Heart left ventricle (tissue), 16 donors: ENCODE measurements at regions of chr2 and their contacts with region 1.

Region 1: DNA sequence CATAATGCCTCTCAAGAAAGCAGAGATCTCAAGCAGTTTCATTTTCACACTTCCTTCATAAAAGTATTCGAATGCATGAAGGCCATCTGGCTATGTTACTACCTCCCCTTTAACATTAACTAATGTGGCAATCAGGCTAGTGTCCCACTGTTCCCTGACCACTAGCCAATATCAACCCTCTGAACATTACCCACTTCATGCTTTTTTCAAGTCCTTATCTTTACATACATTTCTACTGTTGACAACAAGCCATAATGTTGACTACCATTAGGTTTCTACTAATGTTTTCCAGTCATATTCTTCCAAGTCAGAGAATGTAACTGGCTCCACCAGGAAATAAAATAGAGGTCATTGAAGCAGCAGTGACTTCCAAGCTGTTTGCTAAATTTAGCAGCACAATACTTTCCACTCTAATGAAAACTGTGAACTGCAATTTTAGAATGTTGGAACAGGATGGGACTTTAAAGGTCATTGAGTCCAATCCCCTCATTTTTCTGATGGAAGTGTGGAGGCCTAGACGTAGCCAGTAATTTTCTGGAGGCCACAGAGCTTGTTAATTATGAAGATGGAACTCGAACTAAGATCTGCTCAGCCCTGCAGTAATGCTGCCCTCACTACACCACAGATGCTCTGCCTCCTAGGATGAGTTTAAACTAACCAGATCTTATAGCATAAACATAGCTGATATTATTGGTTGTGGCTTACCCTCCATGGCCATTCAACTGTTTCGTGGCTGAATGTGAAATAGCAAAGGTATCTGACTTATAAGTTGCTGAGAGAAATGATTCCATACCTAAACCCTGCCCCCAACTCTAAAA is 630 bp upstream of the PPP1R1C start:
- DNase-seq: no peak
- ATAC-seq: peak; percentile 62 to 74 (median 72)
- H3K4me3 ChIP-seq: peak overlapping the region in 9 of 12 donors; percentile 17 to 54 (median 46)
- H3K27ac ChIP-seq: peak overlapping the region; percentile 7 to 86 (median 77)
- H3K4me1 ChIP-seq: peaks cover 0 to 29% (median 13%) of the 10 kb centered on the region in 12 donors
- H3K27me3 ChIP-seq: no peaks in the 10 kb centered on the region
- CTCF ChIP-seq: no peak
- POLR2A ChIP-seq: no peak

Region 2: GRCh38 chr2:181607629-181608590 is 377.1 kb before region 1 on chr2:
- intact Hi-C with region 1: no loop called
- DNase-seq: no peak
- ATAC-seq: no peak
- H3K4me3 ChIP-seq: no peak overlapping the region
- H3K27ac ChIP-seq: no peak overlapping the region
- H3K4me1 ChIP-seq: peaks cover 0 to 5% (median 0%) of the 10 kb centered on the region in 12 donors
- H3K27me3 ChIP-seq: peaks cover 0 to 4% (median 0%) of the 10 kb centered on the region in 9 donors
- CTCF ChIP-seq: no peak
- POLR2A ChIP-seq: no peak

Region 3: GRCh38 chr2:182049372-182050148 is 64.5 kb after region 1 on chr2:
- intact Hi-C with region 1: loop called in 2 of 10 experiments (anchors 5 kb)
- DNase-seq: no peak
- ATAC-seq: peak in 3 of 4 donors; percentile 61 to 64 (median 63)
- H3K4me3 ChIP-seq: no peak overlapping the region
- H3K27ac ChIP-seq: peak overlapping the region in 7 of 12 donors; percentile 12 to 56 (median 20)
- H3K4me1 ChIP-seq: peaks cover 0 to 34% (median 20%) of the 10 kb centered on the region in 12 donors
- H3K27me3 ChIP-seq: no peaks in the 10 kb centered on the region
- CTCF ChIP-seq: no peak
- POLR2A ChIP-seq: no peak

Region 4: GRCh38 chr2:182057002-182057401 is 72.0 kb after region 1 on chr2:
- intact Hi-C with region 1: loop called in 5 of 10 experiments (anchors 5 kb)
- DNase-seq: no peak
- ATAC-seq: no peak
- H3K4me3 ChIP-seq: no peak overlapping the region
- H3K27ac ChIP-seq: peak overlapping the region in 1 of 12 donors; percentile 17
- H3K4me1 ChIP-seq: peaks cover 0 to 23% (median 0%) of the 10 kb centered on the region in 12 donors
- H3K27me3 ChIP-seq: no peaks in the 10 kb centered on the region
- CTCF ChIP-seq: no peak
- POLR2A ChIP-seq: no peak

Region 5: DNA sequence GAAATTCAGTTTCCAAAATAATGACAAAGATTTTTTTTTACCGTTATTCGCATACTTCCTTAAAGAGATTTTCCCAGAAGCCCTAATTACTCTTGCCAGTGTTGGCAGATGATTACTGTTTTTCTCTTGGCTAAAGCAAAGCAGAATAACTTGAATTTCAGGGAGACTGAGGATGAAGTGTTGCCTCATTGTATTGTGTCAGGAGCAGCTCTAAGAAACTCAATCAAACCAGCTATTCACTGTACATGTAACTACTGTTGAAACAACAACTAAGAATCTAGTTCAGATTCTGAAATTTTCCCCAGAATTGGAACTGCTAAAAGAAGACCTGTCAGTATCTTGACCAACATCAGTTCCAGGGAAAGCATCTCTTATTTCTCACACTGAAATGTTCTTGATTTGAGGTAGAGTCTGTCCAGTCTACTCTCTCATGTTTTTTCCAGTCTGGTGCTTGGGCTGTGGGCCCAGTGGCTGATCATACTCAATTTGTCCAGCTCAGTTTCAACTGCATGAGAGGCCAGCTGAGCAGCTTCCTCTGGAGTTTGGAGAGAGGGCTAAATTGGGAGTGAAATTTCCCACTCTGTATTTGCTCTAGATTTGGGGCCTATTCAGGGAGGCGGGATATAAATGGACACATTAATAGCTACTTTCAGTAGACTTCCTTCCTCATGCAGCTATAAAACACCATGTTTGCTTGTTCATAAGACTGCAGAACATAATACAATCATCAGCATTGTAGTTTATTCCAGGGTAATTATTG is 79.2 kb after region 1 on chr2:
- intact Hi-C with region 1: loop called in 3 of 10 experiments (anchors 5 kb)
- DNase-seq: peak in 4 of 5 donors; percentile 45 to 66 (median 58)
- ATAC-seq: peak; percentile 83 to 90 (median 86)
- H3K4me3 ChIP-seq: no peak overlapping the region
- H3K27ac ChIP-seq: peak overlapping the region; percentile 1 to 79 (median 59)
- H3K4me1 ChIP-seq: peaks cover 0 to 41% (median 10%) of the 10 kb centered on the region in 12 donors
- H3K27me3 ChIP-seq: no peaks in the 10 kb centered on the region
- CTCF ChIP-seq: no peak
- POLR2A ChIP-seq: no peak

Region 6: GRCh38 chr2:182866461-182867406 is 881.7 kb after region 1 on chr2 and contains the start of gene FRZB:
- intact Hi-C with region 1: no loop called
- DNase-seq: peak; percentile 73 to 84 (median 76)
- ATAC-seq: peak; percentile 55 to 85 (median 80)
- H3K4me3 ChIP-seq: peak within 1 kb of the TSS; percentile 13 to 66 (median 50)
- H3K27ac ChIP-seq: peak within 1 kb of the TSS in 9 of 12 donors; percentile 14 to 79 (median 58)
- H3K4me1 ChIP-seq: peaks cover 0 to 28% (median 9%) of the 10 kb centered on the region in 12 donors
- H3K27me3 ChIP-seq: peaks cover 0 to 18% (median 0%) of the 10 kb centered on the region in 9 donors
- CTCF ChIP-seq: no peak
- POLR2A ChIP-seq: no peak
- total RNA-seq, gene FRZB: 0.31 to 5.5 (median 1.9) TPM

Region 7: DNA sequence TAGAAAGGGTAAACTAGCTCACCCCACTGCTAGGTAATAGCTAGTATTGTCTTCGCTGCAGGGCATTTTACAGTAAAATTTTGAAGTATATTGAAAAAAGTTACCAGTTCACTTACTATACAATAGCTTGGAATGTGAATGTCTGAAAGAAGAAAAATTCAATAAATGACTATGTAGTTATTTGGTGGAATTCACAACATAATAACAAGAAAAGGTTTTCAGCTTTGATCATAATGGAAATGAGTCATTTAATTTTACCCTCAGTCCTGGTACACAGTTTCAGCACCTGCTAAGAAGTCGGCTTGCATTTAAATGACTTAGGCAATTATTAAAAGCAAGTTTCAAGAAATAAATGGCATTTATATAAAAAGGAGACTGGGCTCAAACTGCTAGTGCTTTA is 1229.7 kb after region 1 on chr2:
- intact Hi-C with region 1: no loop called
- DNase-seq: no peak
- ATAC-seq: no peak
- H3K4me3 ChIP-seq: no peak overlapping the region
- H3K27ac ChIP-seq: no peak overlapping the region
- H3K4me1 ChIP-seq: no peaks in the 10 kb centered on the region
- H3K27me3 ChIP-seq: no peaks in the 10 kb centered on the region
- CTCF ChIP-seq: no peak
- POLR2A ChIP-seq: no peak